HAP-1 (cell line): ENCODE measurements at regions of chr21 and their contacts with region 1.

Region 1: GRCh38 chr21:43295066-43295958 is 126.5 kb downstream of the CRYAA start:
- DNase-seq: no peak
- H3K4me3 ChIP-seq: no peak overlapping the region
- H3K4me1 ChIP-seq: no peaks in the 10 kb centered on the region
- H3K27me3 ChIP-seq: no peaks in the 10 kb centered on the region

Region 2: GRCh38 chr21:43345746-43346409 is 50.6 kb after region 1 on chr21:
- in situ Hi-C with region 1: no loop called
- DNase-seq: no peak
- H3K4me3 ChIP-seq: no peak overlapping the region
- H3K4me1 ChIP-seq: no peaks in the 10 kb centered on the region
- H3K27me3 ChIP-seq: no peaks in the 10 kb centered on the region

Region 3: GRCh38 chr21:43355923-43356285 is 60.6 kb after region 1 on chr21:
- in situ Hi-C with region 1: loop called (anchors 5 kb)
- DNase-seq: no peak
- H3K4me3 ChIP-seq: no peak overlapping the region
- H3K4me1 ChIP-seq: peaks cover 5% of the 10 kb centered on the region; the same call in 1 of the 2 replicates
- H3K27me3 ChIP-seq: no peaks in the 10 kb centered on the region